Caco-2 (cell line): ENCODE measurements at regions of chr10 and their contacts with region 1.

Region 1: DNA sequence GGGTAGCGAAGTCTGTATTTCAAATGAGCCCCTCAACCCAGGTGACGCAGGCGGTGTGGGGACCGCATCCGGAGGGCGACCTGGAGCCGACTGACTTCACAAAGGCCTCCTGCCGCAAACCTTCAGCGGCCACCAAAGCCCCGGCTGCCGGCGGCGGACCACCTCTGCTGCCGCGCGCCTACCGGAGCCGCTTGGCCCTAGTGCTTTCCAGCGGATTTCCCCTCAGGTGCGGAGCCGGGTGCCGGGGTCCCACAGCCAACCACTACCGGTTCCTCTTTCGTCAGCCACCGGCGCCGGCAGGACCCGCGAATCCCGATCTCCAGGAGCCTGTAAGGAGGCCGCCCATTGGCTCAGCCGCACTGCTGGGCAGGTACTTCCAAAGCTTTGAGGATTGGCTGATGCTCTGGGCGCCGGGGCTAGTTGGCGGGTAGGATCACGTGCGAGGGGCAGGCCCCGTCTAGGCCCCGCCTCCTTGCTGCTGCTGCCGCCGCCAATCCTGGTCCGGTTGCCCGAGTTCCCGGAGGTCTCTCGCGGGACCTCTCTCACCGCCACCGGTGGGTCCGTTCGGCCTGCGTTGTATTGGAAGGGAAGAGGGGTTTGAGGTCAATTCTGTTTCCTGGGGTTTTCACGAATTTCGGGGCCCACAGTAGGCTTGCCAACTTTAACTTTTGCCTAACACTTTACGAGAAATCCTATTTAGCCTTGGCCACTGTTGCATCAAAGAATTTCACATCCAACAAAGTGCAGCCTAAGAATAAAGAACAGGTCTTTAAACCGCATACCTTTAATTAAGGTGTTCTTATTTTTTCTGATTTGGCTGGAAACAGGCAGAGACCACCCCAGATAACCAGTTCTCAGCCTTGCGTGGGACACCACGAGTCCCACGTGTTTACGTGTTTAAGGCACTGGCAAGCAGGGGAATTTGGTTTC is at the start of gene GSTO2:
- DNase-seq: peak; percentile 99
- H3K4me3 ChIP-seq: peak within 1 kb of the TSS; percentile 86
- H3K4me3 Mint-ChIP-seq: peak within 1 kb of the TSS; percentile 74
- H3K27ac Mint-ChIP-seq: peak within 1 kb of the TSS; percentile 60
- H3K4me1 ChIP-seq: peaks cover 19% of the 10 kb centered on the region
- H3K4me1 Mint-ChIP-seq: peaks cover 9% of the 10 kb centered on the region
- H3K27me3 ChIP-seq: no peaks in the 10 kb centered on the region
- H3K27me3 Mint-ChIP-seq: no peaks in the 10 kb centered on the region
- CTCF ChIP-seq: no peak
- total RNA-seq, gene GSTO2: 1.1 and 1.4 TPM in 2 replicates

Region 2: DNA sequence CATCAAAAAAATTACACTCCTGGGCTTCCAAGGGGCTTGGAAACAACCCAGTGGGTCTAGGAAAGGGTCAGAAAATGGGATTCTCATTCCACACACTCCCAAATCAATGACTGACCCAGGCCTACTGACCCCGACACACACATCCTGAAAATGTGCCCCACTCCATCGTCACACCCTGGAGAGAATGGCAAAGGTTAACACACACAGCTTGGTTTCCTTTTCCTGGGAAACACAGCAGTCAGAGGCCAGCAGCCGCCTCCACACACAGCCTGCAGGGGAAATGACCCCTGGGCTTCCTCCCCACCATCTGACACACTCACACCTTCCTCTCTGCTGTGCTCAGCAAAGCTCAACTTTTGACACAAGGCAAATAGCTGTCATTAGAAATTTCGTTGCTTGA is 456.5 kb before region 1 on chr10:
- CTCF ChIA-PET with region 1: no interaction called
- POLR2A ChIA-PET with region 1: no interaction called
- intact Hi-C with region 1: no loop called
- DNase-seq: no peak
- H3K4me3 ChIP-seq: no peak overlapping the region
- H3K4me3 Mint-ChIP-seq: no peak overlapping the region
- H3K27ac Mint-ChIP-seq: no peak overlapping the region
- H3K4me1 ChIP-seq: peaks cover 21% of the 10 kb centered on the region
- H3K4me1 Mint-ChIP-seq: peaks cover 28% of the 10 kb centered on the region
- H3K27me3 ChIP-seq: no peaks in the 10 kb centered on the region
- H3K27me3 Mint-ChIP-seq: no peaks in the 10 kb centered on the region
- CTCF ChIP-seq: no peak

Region 3: DNA sequence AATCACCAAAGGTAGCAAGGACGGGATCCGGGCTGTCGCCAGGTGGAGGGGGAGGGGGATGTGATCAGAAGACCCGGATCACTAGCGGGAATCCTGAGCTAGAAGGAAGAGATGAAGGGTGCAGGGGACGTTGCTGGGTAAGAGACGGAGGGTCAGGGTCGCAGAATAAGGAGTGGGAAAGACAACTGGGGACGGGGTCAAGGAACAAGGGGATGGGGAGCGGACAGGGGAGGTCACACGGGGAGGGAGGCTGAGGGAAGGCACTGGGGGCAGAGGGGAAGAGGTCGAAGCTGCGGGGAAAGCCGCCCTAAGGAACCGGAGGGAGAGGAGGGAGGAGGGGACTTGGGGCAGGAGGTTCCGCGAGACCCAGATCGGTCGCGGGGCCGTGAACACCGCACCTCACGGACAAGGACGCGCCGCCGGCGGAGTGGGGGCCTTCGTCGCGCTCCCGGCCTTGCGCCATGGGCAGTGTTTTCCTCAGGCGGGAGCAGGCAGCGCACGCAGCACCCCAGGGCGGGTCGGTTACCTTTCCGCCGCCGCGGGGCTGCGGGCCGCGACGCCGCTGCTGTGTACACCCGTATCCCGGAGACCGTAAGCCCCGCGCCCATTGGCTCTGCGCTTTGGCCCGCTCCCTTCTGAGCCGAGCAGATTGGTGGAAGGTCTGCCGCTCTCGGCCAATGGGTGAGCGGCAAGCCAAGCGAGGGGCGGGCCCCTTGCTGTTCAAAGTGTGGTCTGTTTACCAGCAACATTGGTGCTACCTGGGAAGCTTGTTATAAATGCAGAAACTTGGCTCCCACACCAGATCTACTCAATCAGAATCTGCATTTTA is 37.0 kb before region 1 on chr10 and contains the start of gene CFAP43:
- CTCF ChIA-PET with region 1: no interaction called
- POLR2A ChIA-PET with region 1: no interaction called
- intact Hi-C with region 1: loop called (anchors 1 kb)
- DNase-seq: peak; percentile 99 to 100
- H3K4me3 ChIP-seq: peak within 1 kb of the TSS; percentile 99
- H3K4me3 Mint-ChIP-seq: peak within 1 kb of the TSS; percentile 88
- H3K27ac Mint-ChIP-seq: peak within 1 kb of the TSS; percentile 96
- H3K4me1 ChIP-seq: peaks cover 26% of the 10 kb centered on the region
- H3K4me1 Mint-ChIP-seq: peaks cover 19% of the 10 kb centered on the region
- H3K27me3 ChIP-seq: no peaks in the 10 kb centered on the region
- H3K27me3 Mint-ChIP-seq: no peaks in the 10 kb centered on the region
- CTCF ChIP-seq: no peak
- total RNA-seq, gene CFAP43: 0.52 and 0.77 TPM in 2 replicates